CD4-positive, alpha-beta memory T cell (primary cell): ENCODE measurements at regions of chr19 and their contacts with region 1.

Region 1: GRCh38 chr19:55289117-55289796 is 5.5 kb downstream of the BRSK1 start:
- DNase-seq: no peak
- H3K4me3 ChIP-seq: no peak overlapping the region
- H3K4me3 Mint-ChIP-seq: no peak overlapping the region
- H3K27ac ChIP-seq: no peak overlapping the region
- H3K27ac Mint-ChIP-seq: no peak overlapping the region
- H3K4me1 ChIP-seq: peaks cover 6% of the 10 kb centered on the region
- H3K4me1 Mint-ChIP-seq: peaks cover 4 to 11% (median 8%) of the 10 kb centered on the region in 4 donors
- H3K27me3 ChIP-seq: no peaks in the 10 kb centered on the region
- H3K27me3 Mint-ChIP-seq: no peaks in the 10 kb centered on the region

Region 2: GRCh38 chr19:55141696-55142095 is 147.6 kb before region 1 on chr19:
- CTCF ChIA-PET with region 1: interaction called, 12 read pairs
- POLR2A ChIA-PET with region 1: no interaction called
- intact Hi-C with region 1: no loop called
- DNase-seq: no peak
- H3K4me3 ChIP-seq: no peak overlapping the region
- H3K4me3 Mint-ChIP-seq: no peak overlapping the region
- H3K27ac ChIP-seq: no peak overlapping the region
- H3K27ac Mint-ChIP-seq: no peak overlapping the region
- H3K4me1 ChIP-seq: peaks cover 3% of the 10 kb centered on the region
- H3K4me1 Mint-ChIP-seq: peaks cover 3 to 6% (median 4%) of the 10 kb centered on the region in 4 donors
- H3K27me3 ChIP-seq: peaks cover 18% of the 10 kb centered on the region
- H3K27me3 Mint-ChIP-seq: peaks cover 34% of the 10 kb centered on the region in 2 donors

Region 3: GRCh38 chr19:55301459-55302317 is 12.4 kb after region 1 on chr19:
- CTCF ChIA-PET with region 1: interaction called, 53 read pairs
- POLR2A ChIA-PET with region 1: interaction called, 4 read pairs
- intact Hi-C with region 1: no loop called
- DNase-seq: peak; percentile 87 to 90 (median 88)
- H3K4me3 ChIP-seq: peak overlapping the region; percentile 34 to 49
- H3K4me3 Mint-ChIP-seq: peak overlapping the region; percentile 75 to 86 (median 80)
- H3K27ac ChIP-seq: peak overlapping the region; percentile 22
- H3K27ac Mint-ChIP-seq: peak overlapping the region; percentile 57 to 94 (median 82)
- H3K4me1 ChIP-seq: peaks cover 11% of the 10 kb centered on the region
- H3K4me1 Mint-ChIP-seq: peaks cover 6 to 21% (median 10%) of the 10 kb centered on the region in 4 donors
- H3K27me3 ChIP-seq: no peaks in the 10 kb centered on the region
- H3K27me3 Mint-ChIP-seq: no peaks in the 10 kb centered on the region

Region 4: DNA sequence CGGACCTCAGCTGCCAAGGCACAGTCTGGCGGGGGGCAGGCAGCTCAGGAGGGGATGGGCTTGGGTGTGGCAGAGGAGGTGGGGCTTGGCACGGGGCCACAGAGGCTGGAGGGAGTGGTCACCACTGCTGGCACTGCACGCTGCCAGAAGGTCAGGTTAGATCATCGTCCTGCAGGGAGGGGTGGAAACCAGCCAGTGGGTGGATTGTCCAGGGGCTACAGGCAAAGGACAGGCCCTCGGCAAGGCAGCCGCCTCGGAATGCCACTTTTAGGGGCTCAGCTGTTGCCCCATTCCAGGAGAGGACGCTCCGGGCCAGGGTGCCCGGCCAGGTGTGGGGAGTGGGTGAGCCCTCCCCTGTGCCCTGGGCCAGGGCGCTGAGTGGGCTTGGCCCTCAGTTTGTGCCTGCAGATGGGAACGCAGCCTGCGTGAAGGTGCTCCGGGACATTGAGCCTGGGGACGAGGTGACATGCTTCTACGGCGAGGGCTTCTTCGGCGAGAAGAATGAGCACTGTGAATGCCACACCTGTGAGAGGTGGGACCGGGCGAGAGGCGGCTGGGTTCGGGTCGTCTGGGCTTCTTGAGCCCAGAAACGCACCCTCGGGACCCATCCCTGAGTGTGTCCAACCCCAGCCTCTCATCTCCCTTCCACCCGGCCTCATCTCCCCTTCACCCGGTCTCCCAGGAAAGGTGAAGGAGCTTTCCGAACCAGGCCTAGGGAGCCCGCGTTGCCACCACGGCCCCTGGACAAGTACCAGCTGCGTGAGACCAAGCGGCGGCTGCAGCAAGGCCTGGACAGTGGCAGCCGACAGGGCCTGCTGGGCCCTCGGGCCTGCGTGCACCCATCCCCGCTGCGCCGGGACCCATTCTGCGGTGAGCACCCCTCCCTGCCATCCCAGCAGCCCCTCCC is 56.8 kb after region 1 on chr19:
- CTCF ChIA-PET with region 1: no interaction called
- POLR2A ChIA-PET with region 1: no interaction called
- intact Hi-C with region 1: no loop called
- DNase-seq: no peak
- H3K4me3 ChIP-seq: no peak overlapping the region
- H3K4me3 Mint-ChIP-seq: no peak overlapping the region
- H3K27ac ChIP-seq: no peak overlapping the region
- H3K27ac Mint-ChIP-seq: no peak overlapping the region
- H3K4me1 ChIP-seq: peaks cover 7% of the 10 kb centered on the region
- H3K4me1 Mint-ChIP-seq: peaks cover 2 to 9% (median 4%) of the 10 kb centered on the region in 4 donors
- H3K27me3 ChIP-seq: peaks cover 4% of the 10 kb centered on the region
- H3K27me3 Mint-ChIP-seq: peaks cover 1 to 5% of the 10 kb centered on the region in 2 donors

Region 5: DNA sequence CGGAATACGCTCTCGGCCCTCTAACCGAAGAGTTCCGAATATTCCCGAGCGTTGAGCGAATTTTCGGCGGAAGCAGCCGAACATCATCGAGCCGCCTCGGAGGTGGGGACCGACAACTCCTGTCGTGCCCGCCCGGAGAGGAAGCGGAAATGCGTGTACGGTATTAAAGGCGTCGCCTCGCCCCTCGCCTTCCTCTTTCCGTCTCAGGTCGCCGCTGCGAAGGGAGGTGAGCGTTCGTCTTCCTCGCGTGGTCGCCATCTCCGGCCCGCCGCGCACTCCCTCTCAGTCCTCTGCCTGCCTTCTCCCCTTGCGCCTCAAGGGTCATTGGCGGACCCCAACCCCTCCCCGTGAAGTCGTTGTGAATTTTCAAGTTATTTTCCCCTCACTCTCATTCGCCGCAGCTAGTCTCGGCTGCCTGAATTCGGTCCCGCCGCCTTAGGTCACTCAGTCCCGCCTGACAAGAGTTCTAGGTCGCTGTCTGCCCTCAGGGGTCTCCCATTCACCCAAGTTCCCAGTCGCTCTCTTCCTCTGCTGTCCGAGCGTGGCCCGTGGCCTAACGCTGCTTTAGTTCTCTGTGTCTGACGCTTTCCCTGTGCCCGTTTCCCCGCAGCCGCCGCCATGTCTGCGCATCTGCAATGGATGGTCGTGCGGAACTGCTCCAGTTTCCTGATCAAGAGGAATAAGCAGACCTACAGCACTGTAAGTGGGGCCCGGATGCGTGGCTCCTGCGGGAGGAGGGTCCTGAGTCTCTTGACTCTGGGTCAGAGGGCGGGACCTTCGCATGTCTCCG is 96.7 kb after region 1 on chr19 and contains the start of gene RPL28:
- CTCF ChIA-PET with region 1: interaction called, 8 read pairs
- POLR2A ChIA-PET with region 1: interaction called, 8 read pairs
- intact Hi-C with region 1: loop called (anchors 2 kb)
- DNase-seq: peak; percentile 98 to 100 (median 99)
- H3K4me3 ChIP-seq: peak within 1 kb of the TSS; percentile 85 to 88
- H3K4me3 Mint-ChIP-seq: peak within 1 kb of the TSS; percentile 99 to 100 (median 100)
- H3K27ac ChIP-seq: peak within 1 kb of the TSS; percentile 94
- H3K27ac Mint-ChIP-seq: peak within 1 kb of the TSS; percentile 98 to 100 (median 99)
- H3K4me1 ChIP-seq: peaks cover 68% of the 10 kb centered on the region
- H3K4me1 Mint-ChIP-seq: peaks cover 39 to 88% (median 63%) of the 10 kb centered on the region in 4 donors
- H3K27me3 ChIP-seq: no peaks in the 10 kb centered on the region
- H3K27me3 Mint-ChIP-seq: no peaks in the 10 kb centered on the region
- total RNA-seq, gene RPL28: 3,136 to 3,159 TPM

Region 6: DNA sequence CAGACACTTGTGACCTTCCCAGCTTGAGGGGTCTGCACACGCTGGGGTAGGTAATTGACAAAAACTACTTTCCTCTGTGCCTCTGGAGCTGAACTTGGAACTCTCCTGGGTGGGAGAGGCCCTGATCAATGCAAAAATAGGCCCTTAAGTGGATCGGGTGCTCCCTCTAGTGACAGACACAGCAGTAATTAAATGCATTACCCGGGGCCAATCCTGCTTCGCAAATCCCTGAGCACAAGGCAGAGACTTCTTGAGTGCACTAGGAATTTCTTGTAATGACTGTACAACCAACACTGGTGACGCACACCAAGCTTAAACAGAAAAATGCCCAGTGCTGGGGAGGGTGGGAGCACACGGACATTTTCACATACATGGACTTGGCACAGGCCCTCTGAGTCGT is 128.9 kb after region 1 on chr19:
- CTCF ChIA-PET with region 1: interaction called, 23 read pairs
- POLR2A ChIA-PET with region 1: no interaction called
- intact Hi-C with region 1: loop called (anchors 1 kb)
- DNase-seq: peak; percentile 54 to 61 (median 60)
- H3K4me3 ChIP-seq: no peak overlapping the region
- H3K4me3 Mint-ChIP-seq: no peak overlapping the region
- H3K27ac ChIP-seq: no peak overlapping the region
- H3K27ac Mint-ChIP-seq: peak overlapping the region in 3 of 7 donors; percentile 48 to 74 (median 68)
- H3K4me1 ChIP-seq: peaks cover 25% of the 10 kb centered on the region
- H3K4me1 Mint-ChIP-seq: peaks cover 9 to 29% (median 20%) of the 10 kb centered on the region in 4 donors
- H3K27me3 ChIP-seq: no peaks in the 10 kb centered on the region
- H3K27me3 Mint-ChIP-seq: peaks cover 0 to 3% of the 10 kb centered on the region in 2 donors

Region 7: GRCh38 chr19:55452749-55453346 is 163.6 kb after region 1 on chr19:
- CTCF ChIA-PET with region 1: interaction called, 12 read pairs
- POLR2A ChIA-PET with region 1: no interaction called
- intact Hi-C with region 1: loop called (anchors 1 kb)
- DNase-seq: peak in 3 of 5 donors; percentile 23 to 59 (median 32)
- H3K4me3 ChIP-seq: no peak overlapping the region
- H3K4me3 Mint-ChIP-seq: peak overlapping the region in 3 of 8 donors; percentile 56 to 78 (median 75)
- H3K27ac ChIP-seq: no peak overlapping the region
- H3K27ac Mint-ChIP-seq: no peak overlapping the region
- H3K4me1 ChIP-seq: peaks cover 10% of the 10 kb centered on the region
- H3K4me1 Mint-ChIP-seq: peaks cover 5 to 20% (median 15%) of the 10 kb centered on the region in 4 donors
- H3K27me3 ChIP-seq: no peaks in the 10 kb centered on the region
- H3K27me3 Mint-ChIP-seq: peaks cover 12 to 18% of the 10 kb centered on the region in 2 donors